CD4-positive, alpha-beta T cell (primary cell): ENCODE measurements at regions of chr1 and their contacts with region 1.

Region 1: DNA sequence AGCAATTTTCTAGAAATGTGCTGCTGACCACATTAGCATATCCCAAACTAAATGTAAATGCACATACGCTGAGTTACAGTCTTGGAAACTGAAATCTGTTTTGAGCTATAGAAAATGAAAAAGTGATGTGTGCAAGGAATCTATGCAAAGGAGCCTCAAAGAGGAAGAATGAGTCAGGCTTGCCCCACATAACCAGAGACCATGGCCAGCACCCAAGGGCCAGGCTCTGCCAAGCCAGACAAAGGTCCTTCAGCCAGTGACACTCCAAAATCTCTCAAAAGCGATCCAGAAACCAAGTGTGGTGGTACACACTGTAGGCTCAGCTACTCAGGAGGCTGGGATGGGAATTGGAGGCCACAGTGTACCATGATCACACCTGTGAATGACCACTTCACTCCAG is 195.2 kb downstream of the TOMM20 start:
- DNase-seq: peak in 3 of 14 experiments; percentile 16 to 58 (median 50)
- ATAC-seq: no peak
- H3K4me3 ChIP-seq: no peak overlapping the region
- H3K4me3 Mint-ChIP-seq: no peak overlapping the region
- H3K27ac ChIP-seq: no peak overlapping the region
- H3K27ac Mint-ChIP-seq: no peak overlapping the region
- H3K4me1 ChIP-seq: peaks cover 20% of the 10 kb centered on the region
- H3K4me1 Mint-ChIP-seq: peaks cover 12% of the 10 kb centered on the region
- H3K27me3 ChIP-seq: no peaks in the 10 kb centered on the region
- H3K27me3 Mint-ChIP-seq: no peaks in the 10 kb centered on the region
- CTCF ChIP-seq: no peak

Region 2: DNA sequence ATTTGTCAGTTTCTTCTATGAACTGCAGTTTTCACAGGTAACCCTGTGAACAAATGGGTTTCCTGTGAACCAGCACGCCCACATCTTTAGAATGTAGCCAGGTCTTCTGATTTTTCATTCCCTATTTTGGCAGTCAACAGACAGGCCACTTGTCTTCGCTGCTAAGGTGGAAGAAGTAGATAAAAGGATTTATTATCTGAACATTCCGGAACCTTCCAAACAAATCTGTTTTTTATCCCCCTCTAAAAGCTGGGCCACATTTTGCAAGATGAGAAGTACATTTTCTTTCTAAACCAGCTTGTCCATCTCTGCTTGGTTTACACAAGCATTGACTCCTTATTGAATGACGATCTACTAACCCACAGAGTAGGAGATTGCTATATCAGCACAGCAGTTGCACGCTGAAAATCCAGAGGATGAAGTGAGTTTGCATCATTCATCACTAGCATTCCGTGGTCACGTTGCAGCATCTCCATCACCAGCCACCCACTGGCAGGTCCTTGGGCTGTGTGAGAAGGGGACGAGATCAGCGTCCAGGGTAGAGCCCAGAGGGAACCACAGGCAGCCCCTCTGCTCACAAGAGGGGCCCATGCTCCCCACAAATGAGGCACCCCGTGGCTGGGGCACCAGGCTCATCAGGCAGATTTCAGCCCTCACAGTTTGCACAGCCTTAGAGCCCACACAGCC is 111.7 kb after region 1 on chr1:
- CTCF ChIA-PET with region 1: no interaction called
- POLR2A ChIA-PET with region 1: no interaction called
- intact Hi-C with region 1: loop called in 1 of 2 experiments (anchors 5 kb)
- DNase-seq: no peak
- ATAC-seq: no peak
- H3K4me3 ChIP-seq: no peak overlapping the region
- H3K4me3 Mint-ChIP-seq: no peak overlapping the region
- H3K27ac ChIP-seq: no peak overlapping the region
- H3K27ac Mint-ChIP-seq: no peak overlapping the region
- H3K4me1 ChIP-seq: peaks cover 20% of the 10 kb centered on the region
- H3K4me1 Mint-ChIP-seq: peaks cover 24% of the 10 kb centered on the region
- H3K27me3 ChIP-seq: no peaks in the 10 kb centered on the region
- H3K27me3 Mint-ChIP-seq: no peaks in the 10 kb centered on the region
- CTCF ChIP-seq: no peak

Region 3: DNA sequence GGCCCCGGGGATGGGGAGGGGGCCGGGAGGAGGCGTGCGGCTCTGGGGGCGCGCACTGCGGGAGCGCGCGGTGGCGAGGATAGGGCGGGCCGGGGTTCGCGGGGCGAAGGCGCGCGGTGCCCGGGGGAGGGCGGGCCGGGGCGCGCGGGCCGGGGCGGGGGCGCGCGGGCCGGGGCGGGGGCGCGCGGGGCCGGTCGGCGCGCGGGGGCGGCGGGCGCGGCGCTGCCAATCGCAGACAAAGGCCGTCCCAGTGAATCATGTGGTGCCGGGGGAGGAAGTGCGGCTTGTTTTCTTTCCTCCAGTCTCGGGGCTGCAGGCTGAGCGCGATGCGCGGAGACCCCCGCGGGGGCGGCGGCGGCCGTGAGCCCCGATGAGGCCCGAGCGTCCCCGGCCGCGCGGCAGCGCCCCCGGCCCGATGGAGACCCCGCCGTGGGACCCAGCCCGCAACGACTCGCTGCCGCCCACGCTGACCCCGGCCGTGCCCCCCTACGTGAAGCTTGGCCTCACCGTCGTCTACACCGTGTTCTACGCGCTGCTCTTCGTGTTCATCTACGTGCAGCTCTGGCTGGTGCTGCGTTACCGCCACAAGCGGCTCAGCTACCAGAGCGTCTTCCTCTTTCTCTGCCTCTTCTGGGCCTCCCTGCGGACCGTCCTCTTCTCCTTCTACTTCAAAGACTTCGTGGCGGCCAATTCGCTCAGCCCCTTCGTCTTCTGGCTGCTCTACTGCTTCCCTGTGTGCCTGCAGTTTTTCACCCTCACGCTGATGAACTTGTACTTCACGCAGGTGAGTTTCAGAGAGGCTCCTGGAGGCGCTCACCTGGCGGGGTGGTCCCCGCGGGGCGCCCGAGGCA is 1209.0 kb after region 1 on chr1 and contains the start of gene GPR137B:
- CTCF ChIA-PET with region 1: no interaction called
- POLR2A ChIA-PET with region 1: no interaction called
- intact Hi-C with region 1: no loop called
- DNase-seq: peak; percentile 19 to 74 (median 52)
- ATAC-seq: peak; percentile 75
- H3K4me3 ChIP-seq: peak within 1 kb of the TSS; percentile 80
- H3K4me3 Mint-ChIP-seq: peak within 1 kb of the TSS; percentile 100
- H3K27ac ChIP-seq: no peak within 1 kb of the TSS
- H3K27ac Mint-ChIP-seq: peak within 1 kb of the TSS; percentile 74
- H3K4me1 ChIP-seq: peaks cover 26% of the 10 kb centered on the region
- H3K4me1 Mint-ChIP-seq: peaks cover 36% of the 10 kb centered on the region
- H3K27me3 ChIP-seq: peaks cover 14 to 16% of the 10 kb centered on the region in 2 experiments
- H3K27me3 Mint-ChIP-seq: peaks cover 39% of the 10 kb centered on the region
- CTCF ChIP-seq: no peak
- total RNA-seq, gene GPR137B: 6.3 to 7.4 TPM